CD4-positive, alpha-beta T cell (primary cell): ENCODE measurements at regions of chr19 and their contacts with region 1.

Region 1: DNA sequence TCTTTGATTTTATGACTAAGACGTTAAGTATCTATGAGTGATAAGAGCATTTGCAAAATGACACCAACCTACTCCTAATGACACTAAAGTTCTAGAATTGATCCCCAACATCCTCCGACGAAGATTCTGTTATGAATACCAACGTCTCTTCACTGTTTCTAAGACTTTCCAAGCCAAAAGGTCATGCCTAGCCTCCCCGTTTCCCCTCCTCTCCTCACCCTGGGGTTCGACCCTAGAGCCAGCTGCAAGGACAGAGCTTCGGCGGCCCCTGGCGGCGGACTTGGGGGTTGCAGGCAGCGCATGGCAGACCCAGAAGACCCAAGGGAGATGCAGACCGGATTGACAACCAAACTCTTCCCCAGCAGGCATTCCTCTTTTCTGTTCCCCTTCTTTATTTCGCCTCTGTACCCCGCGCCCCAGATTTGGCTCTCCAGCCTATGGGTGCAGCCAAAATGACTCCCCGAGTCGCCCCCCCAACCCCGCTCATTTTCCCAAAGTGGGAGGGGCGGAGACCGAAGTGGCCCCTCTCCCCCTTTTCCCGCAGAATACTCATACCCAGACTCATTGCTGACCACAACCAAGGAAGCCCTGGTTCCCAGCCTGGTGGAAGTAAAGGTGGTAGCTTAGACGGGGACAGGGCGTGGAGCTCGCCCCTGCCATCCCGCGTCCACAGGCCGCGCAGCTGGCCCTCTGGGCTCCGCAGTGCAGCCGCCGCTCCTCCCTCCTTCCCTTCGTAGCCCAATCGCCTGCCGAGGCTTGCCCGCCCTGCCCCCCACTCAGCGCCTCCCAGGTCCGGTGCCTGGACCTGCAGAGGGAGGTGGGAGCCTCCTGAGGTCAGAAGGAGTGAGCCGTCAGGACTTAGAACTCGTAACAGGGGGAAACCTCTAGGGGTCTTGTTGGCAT is 4.1 kb upstream of the EML2 start:
- DNase-seq: peak; percentile 77 to 93 (median 88)
- ATAC-seq: peak; percentile 35
- H3K4me3 ChIP-seq: peak overlapping the region; percentile 66
- H3K4me3 Mint-ChIP-seq: peak overlapping the region; percentile 74
- H3K27ac ChIP-seq: peak overlapping the region; percentile 91 to 92
- H3K27ac Mint-ChIP-seq: peak overlapping the region; percentile 72
- H3K4me1 ChIP-seq: peaks cover 72% of the 10 kb centered on the region
- H3K4me1 Mint-ChIP-seq: peaks cover 58% of the 10 kb centered on the region
- H3K27me3 ChIP-seq: no peaks in the 10 kb centered on the region
- H3K27me3 Mint-ChIP-seq: no peaks in the 10 kb centered on the region
- CTCF ChIP-seq: peak; percentile 96

Region 2: DNA sequence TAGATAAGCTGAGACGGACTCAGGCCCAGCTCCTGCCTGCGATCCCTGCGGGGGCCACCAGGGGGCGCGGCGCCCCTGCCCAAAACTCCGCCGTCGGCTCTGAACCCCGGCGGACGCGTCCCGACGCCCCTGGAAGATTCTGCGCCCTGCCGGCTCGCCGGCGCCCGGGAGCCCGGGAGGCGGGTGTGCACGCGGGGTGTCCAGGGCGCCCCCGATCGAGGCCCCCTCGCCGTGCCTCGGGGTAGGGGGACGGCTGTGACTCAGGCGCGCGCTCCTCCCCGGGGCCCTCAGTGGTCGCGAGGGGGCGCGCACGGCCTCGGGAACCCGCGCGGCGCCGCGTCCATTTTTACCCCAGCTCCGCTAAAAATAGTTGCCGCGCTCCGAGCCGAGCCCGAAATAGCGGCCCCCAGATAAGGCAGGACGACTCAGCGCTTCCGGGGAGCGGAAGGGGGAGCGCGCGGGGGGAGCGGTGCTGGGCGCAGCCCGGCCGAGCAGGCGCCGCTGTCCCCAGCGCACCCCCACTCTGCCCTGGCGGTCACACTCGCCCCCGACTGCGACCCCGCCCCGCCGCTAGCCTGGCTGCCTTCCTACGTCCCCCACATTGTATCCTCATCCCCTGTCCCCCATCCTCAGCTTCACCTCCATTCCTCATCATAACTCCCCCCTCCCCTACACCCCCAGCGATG is 203.6 kb before region 1 on chr19:
- CTCF ChIA-PET with region 1: interaction called, 11 read pairs
- POLR2A ChIA-PET with region 1: interaction called, 17 read pairs
- intact Hi-C with region 1: loop called in 1 of 2 experiments (anchors 5 kb)
- DNase-seq: peak; percentile 74 to 93 (median 82)
- ATAC-seq: peak; percentile 66
- H3K4me3 ChIP-seq: peak overlapping the region; percentile 37
- H3K4me3 Mint-ChIP-seq: peak overlapping the region; percentile 80
- H3K27ac ChIP-seq: peak overlapping the region; percentile 52 to 65
- H3K27ac Mint-ChIP-seq: peak overlapping the region; percentile 63
- H3K4me1 ChIP-seq: peaks cover 40% of the 10 kb centered on the region
- H3K4me1 Mint-ChIP-seq: peaks cover 37% of the 10 kb centered on the region
- H3K27me3 ChIP-seq: no peaks in the 10 kb centered on the region
- H3K27me3 Mint-ChIP-seq: no peaks in the 10 kb centered on the region
- CTCF ChIP-seq: peak; percentile 100

Region 3: GRCh38 chr19:45506246-45506990 is 136.9 kb before region 1 on chr19:
- CTCF ChIA-PET with region 1: interaction called, 9 read pairs
- POLR2A ChIA-PET with region 1: interaction called, 4 read pairs
- intact Hi-C with region 1: loop called in 1 of 2 experiments (anchors 5 kb)
- DNase-seq: peak; percentile 95 to 100 (median 97)
- ATAC-seq: peak; percentile 76
- H3K4me3 ChIP-seq: peak overlapping the region; percentile 89
- H3K4me3 Mint-ChIP-seq: peak overlapping the region; percentile 99
- H3K27ac ChIP-seq: peak overlapping the region; percentile 94 to 95
- H3K27ac Mint-ChIP-seq: peak overlapping the region; percentile 99
- H3K4me1 ChIP-seq: peaks cover 47% of the 10 kb centered on the region
- H3K4me1 Mint-ChIP-seq: peaks cover 47% of the 10 kb centered on the region
- H3K27me3 ChIP-seq: no peaks in the 10 kb centered on the region
- H3K27me3 Mint-ChIP-seq: no peaks in the 10 kb centered on the region
- CTCF ChIP-seq: peak; percentile 63

Region 4: GRCh38 chr19:45607071-45608029 is 35.9 kb before region 1 on chr19:
- CTCF ChIA-PET with region 1: interaction called, 7 read pairs
- POLR2A ChIA-PET with region 1: interaction called, 10 read pairs
- intact Hi-C with region 1: loop called (anchors 1 kb)
- DNase-seq: peak in 12 of 14 experiments; percentile 11 to 70 (median 36)
- ATAC-seq: peak; percentile 48
- H3K4me3 ChIP-seq: no peak overlapping the region
- H3K4me3 Mint-ChIP-seq: no peak overlapping the region
- H3K27ac ChIP-seq: no peak overlapping the region
- H3K27ac Mint-ChIP-seq: no peak overlapping the region
- H3K4me1 ChIP-seq: peaks cover 9% of the 10 kb centered on the region
- H3K4me1 Mint-ChIP-seq: no peaks in the 10 kb centered on the region
- H3K27me3 ChIP-seq: peaks cover 6 to 16% of the 10 kb centered on the region in 2 experiments
- H3K27me3 Mint-ChIP-seq: peaks cover 16% of the 10 kb centered on the region
- CTCF ChIP-seq: peak; percentile 89

Region 5: DNA sequence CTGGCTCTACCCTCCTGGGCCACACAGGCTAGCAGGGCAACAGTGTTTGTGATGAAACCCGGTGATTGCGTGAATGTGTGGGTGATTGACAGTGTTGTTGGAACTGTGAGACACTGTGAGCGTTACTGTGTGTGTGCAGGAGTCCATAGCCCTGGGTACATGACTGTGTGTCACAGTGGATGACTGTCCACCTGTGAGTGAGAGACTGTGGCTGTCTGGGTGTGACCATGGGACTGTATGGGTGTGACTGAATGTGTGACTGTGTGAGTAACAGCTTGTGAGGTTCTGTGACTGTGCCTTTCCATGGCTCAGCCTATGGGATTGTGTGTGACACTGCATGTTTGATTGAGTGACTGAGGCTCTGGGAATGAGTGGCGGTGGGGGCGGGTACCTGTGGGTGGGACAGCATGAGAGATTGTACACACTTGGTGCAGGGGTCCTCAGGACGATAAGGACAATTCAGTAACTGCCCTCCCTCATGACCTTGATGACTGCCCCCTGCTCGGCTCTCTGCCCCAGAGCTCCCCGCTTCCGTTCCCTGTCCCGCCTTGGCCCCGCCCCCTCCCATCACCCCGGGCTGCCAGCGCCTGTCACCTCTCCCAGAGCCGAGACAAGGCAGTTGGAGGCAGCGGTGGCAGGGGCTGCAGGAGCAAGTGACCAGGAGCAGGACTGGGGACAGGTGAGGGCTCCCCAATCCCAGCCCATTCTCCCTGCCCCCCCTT is 24.5 kb after region 1 on chr19 and contains the start of gene GIPR:
- CTCF ChIA-PET with region 1: interaction called, 16 read pairs
- POLR2A ChIA-PET with region 1: interaction called, 4 read pairs
- intact Hi-C with region 1: no loop called
- DNase-seq: peak in 12 of 14 experiments; percentile 34 to 76 (median 57)
- ATAC-seq: peak; percentile 52
- H3K4me3 ChIP-seq: peak within 1 kb of the TSS; percentile 57
- H3K4me3 Mint-ChIP-seq: peak within 1 kb of the TSS; percentile 87
- H3K27ac ChIP-seq: no peak within 1 kb of the TSS
- H3K27ac Mint-ChIP-seq: no peak within 1 kb of the TSS
- H3K4me1 ChIP-seq: peaks cover 46% of the 10 kb centered on the region
- H3K4me1 Mint-ChIP-seq: peaks cover 44% of the 10 kb centered on the region
- H3K27me3 ChIP-seq: peaks cover 9 to 18% of the 10 kb centered on the region in 2 experiments
- H3K27me3 Mint-ChIP-seq: peaks cover 45% of the 10 kb centered on the region
- CTCF ChIP-seq: no peak
- total RNA-seq, gene GIPR: 2.4 to 3.0 TPM